Sciatic nerve (tissue), 2 donors: ENCODE measurements at regions of chr5 and their contacts with region 1.

Region 1: GRCh38 chr5:53481887-53482716 is 1.7 kb downstream of the FST start:
- DNase-seq: peak; percentile 87
- ATAC-seq: peak; percentile 84

Region 2: GRCh38 chr5:53446908-53447307 is 35.2 kb before region 1 on chr5:
- intact Hi-C with region 1: no loop called
- DNase-seq: no peak
- ATAC-seq: no peak

Region 3: DNA sequence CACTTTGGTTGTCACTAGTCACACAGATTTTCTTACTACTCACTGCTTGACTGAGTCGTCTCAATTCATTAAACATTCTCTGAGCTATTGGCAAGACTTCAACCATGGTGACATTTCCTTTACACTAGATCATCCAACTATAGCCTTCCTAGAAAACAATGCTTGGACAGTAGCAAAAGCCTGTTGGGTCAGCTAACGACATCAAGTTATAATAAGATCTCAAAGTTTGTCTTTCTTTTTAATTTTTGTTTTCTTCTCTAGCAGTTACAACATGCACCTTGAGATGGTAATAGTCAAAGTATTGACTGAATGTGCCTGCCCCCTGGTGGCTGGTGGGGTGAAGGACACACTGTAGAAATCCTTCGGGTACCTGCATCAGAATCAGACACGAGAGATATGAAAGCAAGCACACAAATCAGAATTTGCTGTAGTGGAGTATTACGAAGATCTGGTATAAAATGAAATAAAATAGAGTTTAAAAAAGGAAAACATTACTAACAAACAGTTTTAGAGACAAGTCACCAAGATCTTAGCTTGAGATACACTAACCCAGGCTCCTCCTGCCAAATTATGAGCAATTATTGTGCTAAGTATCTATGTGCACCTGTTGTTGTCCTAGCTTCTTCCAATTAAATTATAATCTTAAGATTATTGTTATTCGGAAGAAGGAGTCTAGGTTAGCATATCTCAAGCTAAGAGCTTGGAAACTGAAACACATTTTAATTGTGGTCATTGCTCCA is 747.1 kb after region 1 on chr5:
- intact Hi-C with region 1: loop called (anchors 10 kb)
- DNase-seq: peak; percentile 89
- ATAC-seq: peak; percentile 81